Heart left ventricle (tissue), 16 donors: ENCODE measurements at regions of chr19 and their contacts with region 1.

Region 1: DNA sequence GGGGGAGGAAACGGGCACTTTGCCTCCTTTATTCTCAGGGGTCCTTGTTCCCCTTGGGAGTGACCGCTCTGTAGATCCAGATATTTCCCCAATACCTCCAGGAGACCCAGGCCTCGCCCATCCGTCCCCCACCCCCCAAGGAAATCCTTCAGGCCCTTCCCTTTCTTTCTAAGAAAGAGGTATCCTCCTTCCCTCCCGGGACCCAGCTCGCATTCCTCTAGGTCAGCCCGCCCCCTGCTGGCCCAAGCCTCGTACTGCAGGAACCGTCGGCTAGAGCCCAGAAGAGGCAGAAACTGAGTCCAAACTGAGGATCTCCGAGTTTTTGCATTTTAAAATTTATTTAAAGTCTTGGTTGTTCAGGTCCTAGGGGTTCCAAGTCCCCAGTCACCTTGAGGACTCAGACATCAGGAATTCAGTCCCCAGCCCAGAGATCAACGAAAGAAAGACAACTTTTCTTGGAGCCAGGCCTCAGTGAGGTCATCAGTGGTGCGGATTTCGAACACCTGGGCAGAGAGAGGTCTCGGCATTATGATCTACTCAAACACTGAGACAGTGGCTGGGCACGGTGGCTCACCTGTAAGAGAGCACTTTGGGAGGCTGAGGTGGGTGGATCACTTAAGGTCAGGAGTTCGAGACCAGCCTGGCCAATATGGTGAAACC is 7.5 kb upstream of the LRFN1 start:
- DNase-seq: peak; percentile 74 to 91 (median 82)
- ATAC-seq: peak; percentile 28 to 87 (median 78)
- H3K4me3 ChIP-seq: no peak overlapping the region
- H3K27ac ChIP-seq: no peak overlapping the region
- H3K4me1 ChIP-seq: peaks cover 0 to 11% (median 2%) of the 10 kb centered on the region in 12 donors
- H3K27me3 ChIP-seq: no peaks in the 10 kb centered on the region
- CTCF ChIP-seq: peak; percentile 91 to 97 (median 96)
- POLR2A ChIP-seq: no peak

Region 2: GRCh38 chr19:38949580-38950367 is 378.4 kb before region 1 on chr19:
- intact Hi-C with region 1: loop called in 1 of 10 experiments (anchors 10 kb)
- DNase-seq: peak; percentile 85 to 93 (median 90)
- ATAC-seq: peak; percentile 90 to 98 (median 96)
- H3K4me3 ChIP-seq: peak overlapping the region in 11 of 12 donors; percentile 9 to 50 (median 44)
- H3K27ac ChIP-seq: no peak overlapping the region
- H3K4me1 ChIP-seq: peaks cover 3 to 12% (median 8%) of the 10 kb centered on the region in 12 donors
- H3K27me3 ChIP-seq: peaks cover 0 to 11% (median 0%) of the 10 kb centered on the region in 9 donors
- CTCF ChIP-seq: no peak
- POLR2A ChIP-seq: no peak

Region 3: GRCh38 chr19:38964738-38965137 is 363.4 kb before region 1 on chr19:
- intact Hi-C with region 1: loop called in 6 of 10 experiments (anchors 5 to 10 kb)
- DNase-seq: no peak
- ATAC-seq: no peak
- H3K4me3 ChIP-seq: no peak overlapping the region
- H3K27ac ChIP-seq: no peak overlapping the region
- H3K4me1 ChIP-seq: peaks cover 0 to 9% (median 0%) of the 10 kb centered on the region in 12 donors
- H3K27me3 ChIP-seq: no peaks in the 10 kb centered on the region
- CTCF ChIP-seq: no peak
- POLR2A ChIP-seq: no peak

Region 4: GRCh38 chr19:39110263-39110967 is 217.8 kb before region 1 on chr19:
- intact Hi-C with region 1: loop called in 1 of 10 experiments (anchors 2 kb)
- DNase-seq: peak in 1 of 5 donors; percentile 39
- ATAC-seq: peak in 3 of 4 donors; percentile 62 to 71 (median 69)
- H3K4me3 ChIP-seq: no peak overlapping the region
- H3K27ac ChIP-seq: no peak overlapping the region
- H3K4me1 ChIP-seq: no peaks in the 10 kb centered on the region
- H3K27me3 ChIP-seq: peaks cover 0 to 61% (median 15%) of the 10 kb centered on the region in 9 donors
- CTCF ChIP-seq: peak; percentile 54 to 79 (median 72)
- POLR2A ChIP-seq: no peak

Region 5: DNA sequence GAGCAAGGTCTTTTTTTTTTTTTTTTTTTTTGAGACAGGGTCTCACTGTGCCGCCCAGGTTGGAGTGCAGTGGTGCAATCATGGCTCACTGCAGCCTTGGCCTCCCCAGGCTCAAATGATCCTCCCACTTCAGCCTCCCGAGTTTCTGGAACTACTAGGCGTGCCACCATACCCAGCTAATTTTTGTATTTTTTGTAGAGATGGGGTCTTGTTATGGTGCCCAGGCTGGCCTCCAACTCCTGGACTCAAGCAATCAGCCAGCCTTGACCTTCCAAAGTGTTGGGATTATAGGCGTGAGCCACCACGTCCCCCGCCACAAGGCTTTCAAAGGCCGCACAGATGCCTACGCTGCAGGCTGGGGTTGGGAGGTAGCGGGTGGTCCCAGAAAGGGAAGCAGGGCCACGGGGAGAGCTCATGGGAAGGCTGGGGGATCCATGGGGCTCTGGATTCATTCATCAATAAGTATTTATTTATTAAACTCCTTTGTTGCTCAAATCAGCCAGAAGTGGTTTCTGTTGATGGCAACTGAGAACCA is 212.6 kb before region 1 on chr19:
- intact Hi-C with region 1: loop called in 4 of 10 experiments (anchors 2 to 5 kb)
- DNase-seq: no peak
- ATAC-seq: no peak
- H3K4me3 ChIP-seq: no peak overlapping the region
- H3K27ac ChIP-seq: no peak overlapping the region
- H3K4me1 ChIP-seq: no peaks in the 10 kb centered on the region
- H3K27me3 ChIP-seq: peaks cover 0 to 56% (median 8%) of the 10 kb centered on the region in 9 donors
- CTCF ChIP-seq: no peak
- POLR2A ChIP-seq: no peak

Region 6: DNA sequence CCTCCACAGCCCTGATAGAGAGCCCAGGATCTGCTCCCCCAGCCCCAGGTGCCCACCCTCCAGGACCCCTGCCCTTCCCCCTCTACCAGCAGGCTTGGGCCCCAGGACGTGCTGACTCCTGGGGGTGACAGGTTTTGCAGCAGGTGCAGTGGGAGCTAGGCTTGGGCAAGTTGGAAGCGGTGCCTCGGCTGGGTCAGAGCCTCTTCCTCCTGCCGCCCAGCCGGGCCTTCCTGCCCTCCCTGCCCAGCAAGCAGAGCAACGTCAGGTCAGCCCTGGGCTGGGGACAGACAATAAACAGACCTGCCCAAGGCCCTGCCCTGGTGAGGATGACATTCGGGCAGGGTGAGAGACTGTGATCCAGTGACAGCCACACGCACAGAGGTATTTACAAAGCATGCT is 140.6 kb before region 1 on chr19:
- intact Hi-C with region 1: loop called in 2 of 10 experiments (anchors 5 to 10 kb)
- DNase-seq: no peak
- ATAC-seq: peak in 3 of 4 donors; percentile 43 to 68 (median 65)
- H3K4me3 ChIP-seq: no peak overlapping the region
- H3K27ac ChIP-seq: no peak overlapping the region
- H3K4me1 ChIP-seq: peaks cover 0 to 5% (median 0%) of the 10 kb centered on the region in 12 donors
- H3K27me3 ChIP-seq: peaks cover 0 to 28% (median 7%) of the 10 kb centered on the region in 9 donors
- CTCF ChIP-seq: no peak
- POLR2A ChIP-seq: no peak

Region 7: DNA sequence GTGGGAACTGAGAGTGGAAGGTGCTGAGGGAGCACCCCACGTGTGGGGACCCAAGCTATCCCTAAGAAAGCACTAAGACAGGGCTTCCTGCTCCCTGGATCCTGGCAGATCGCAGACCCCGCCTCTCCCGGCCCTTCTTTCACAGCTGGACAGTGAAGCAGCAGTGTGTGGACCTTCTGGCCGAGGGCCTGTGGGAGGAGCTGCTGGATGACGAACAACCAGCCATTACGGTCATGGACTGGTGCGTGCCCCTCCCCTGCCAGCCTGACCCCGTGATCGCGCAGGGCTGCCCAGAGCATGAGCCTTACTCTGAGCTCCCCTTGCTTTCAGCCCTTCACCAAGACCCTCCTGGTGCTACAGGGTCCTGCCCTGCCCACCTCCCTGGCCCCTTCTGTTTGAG is 129.2 kb before region 1 on chr19:
- intact Hi-C with region 1: loop called in 1 of 10 experiments (anchors 10 kb)
- DNase-seq: peak in 1 of 5 donors; percentile 38
- ATAC-seq: peak in 3 of 4 donors; percentile 34 to 66 (median 63)
- H3K4me3 ChIP-seq: no peak overlapping the region
- H3K27ac ChIP-seq: no peak overlapping the region
- H3K4me1 ChIP-seq: peaks cover 0 to 9% (median 0%) of the 10 kb centered on the region in 12 donors
- H3K27me3 ChIP-seq: peaks cover 25 to 99% (median 79%) of the 10 kb centered on the region in 9 donors
- CTCF ChIP-seq: no peak
- POLR2A ChIP-seq: no peak